ENCODE measurements at regions of chr1 and their contacts with region 1.

Region 1: GRCh38 chr1:87292684-87293493 is 35.8 kb upstream of the LMO4 start:
- DNase-seq: peak; percentile 49 to 77 (median 58)
- ATAC-seq: peak; percentile 92
- H3K4me3 ChIP-seq: no peak overlapping the region
- H3K27ac ChIP-seq: no peak overlapping the region
- H3K4me1 ChIP-seq: no peaks in the 10 kb centered on the region
- H3K27me3 ChIP-seq: peaks cover 5 to 14% of the 10 kb centered on the region in 2 experiments; a peak in 3 of 5 replicates
- CTCF ChIP-seq: peak; percentile 68 to 84 (median 71)
- EP300 ChIP-seq: no peak
- POLR2A ChIP-seq: no peak
- RAD21 ChIP-seq: peak; percentile 87 to 89

Region 2: DNA sequence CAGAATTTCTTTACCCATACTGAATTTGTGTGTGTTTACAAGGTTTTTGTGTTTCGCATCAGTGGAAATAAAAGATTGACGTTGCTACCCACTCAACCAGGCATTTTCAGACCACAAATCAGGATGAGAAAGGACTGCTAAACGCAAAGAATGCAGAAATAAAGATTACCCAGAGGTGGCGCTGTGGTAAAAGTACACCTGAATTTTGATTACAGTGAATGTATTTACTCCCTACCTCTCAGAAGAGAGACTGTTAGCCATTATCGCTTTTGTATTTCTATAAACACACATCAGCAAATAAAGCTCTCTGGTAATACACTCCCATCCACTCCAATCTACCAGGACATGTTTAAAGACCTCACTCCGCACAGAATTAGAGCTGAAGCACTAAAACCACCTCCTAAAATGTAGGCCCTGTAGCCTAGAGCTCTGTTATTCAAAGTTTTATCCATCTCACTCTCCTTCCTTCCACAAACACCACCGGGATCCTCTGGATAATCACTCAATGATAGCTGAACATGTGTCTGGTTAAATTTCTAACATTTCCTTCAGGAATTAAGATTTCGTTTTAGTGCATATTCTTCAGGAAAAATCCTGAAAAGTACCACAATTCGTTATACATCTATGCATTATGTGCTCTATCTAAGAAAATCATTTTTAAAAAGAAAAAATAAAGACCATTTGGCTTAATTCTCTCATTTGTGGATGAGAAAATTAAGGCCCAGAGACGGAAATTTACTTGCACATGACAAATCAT is 33.3 kb after region 1 on chr1:
- CTCF ChIA-PET with region 1: no interaction called
- POLR2A ChIA-PET with region 1: no interaction called
- in situ Hi-C with region 1: no loop called
- intact Hi-C with region 1: no loop called
- DNase-seq: peak; percentile 37 to 64 (median 46)
- ATAC-seq: no peak
- H3K4me3 ChIP-seq: no peak overlapping the region
- H3K27ac ChIP-seq: no peak overlapping the region
- H3K4me1 ChIP-seq: peaks cover 5% of the 10 kb centered on the region in 2 experiments; a peak in 3 of 5 replicates
- H3K27me3 ChIP-seq: no peaks in the 10 kb centered on the region
- CTCF ChIP-seq: peak; percentile 47 to 79 (median 76); a peak in 5 of 6 replicates
- EP300 ChIP-seq: no peak
- POLR2A ChIP-seq: no peak
- RAD21 ChIP-seq: peak; percentile 52 to 80

Region 3: DNA sequence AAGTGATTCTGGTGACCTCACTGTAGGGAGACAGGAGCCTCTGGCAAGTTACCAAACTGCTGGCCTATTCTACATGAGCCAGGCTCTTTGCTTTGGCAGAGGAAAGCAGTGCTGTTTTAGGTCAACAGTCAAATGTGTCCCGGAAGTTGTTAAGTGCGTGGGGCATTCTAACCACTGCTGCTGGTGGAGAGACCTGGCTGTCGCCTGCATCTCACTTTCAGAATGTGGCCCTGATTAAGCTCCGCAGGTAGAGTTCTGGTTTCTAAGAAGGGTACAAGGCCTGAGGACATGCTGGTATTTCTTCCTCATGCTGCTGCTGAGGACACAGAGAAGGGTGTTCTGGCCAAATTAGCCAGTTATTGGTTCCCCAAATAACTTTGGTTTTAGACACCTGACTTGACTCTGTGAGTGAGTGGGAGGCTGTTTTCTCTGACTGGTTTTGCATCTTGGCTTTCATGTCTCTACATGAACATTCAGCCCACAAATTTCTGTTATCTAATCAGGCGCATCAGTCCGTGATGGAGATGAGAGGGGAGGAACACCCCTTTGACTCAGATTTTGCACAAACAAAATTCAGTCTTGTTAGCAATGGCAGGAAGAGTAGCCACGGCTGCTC is 156.6 kb after region 1 on chr1:
- CTCF ChIA-PET with region 1: interaction called, 12 read pairs
- POLR2A ChIA-PET with region 1: no interaction called
- in situ Hi-C with region 1: no loop called
- intact Hi-C with region 1: loop called (anchors 2 kb)
- DNase-seq: no peak
- ATAC-seq: peak; percentile 36; the same call in 2 of the 3 replicates
- H3K4me3 ChIP-seq: no peak overlapping the region
- H3K27ac ChIP-seq: no peak overlapping the region
- H3K4me1 ChIP-seq: no peaks in the 10 kb centered on the region; a peak in 1 of 5 replicates
- H3K27me3 ChIP-seq: peaks cover 0 to 4% of the 10 kb centered on the region in 2 experiments; a peak in 1 of 5 replicates
- CTCF ChIP-seq: no peak
- EP300 ChIP-seq: no peak
- POLR2A ChIP-seq: no peak
- RAD21 ChIP-seq: no peak

Region 4: GRCh38 chr1:87942165-87942564 is 649.3 kb after region 1 on chr1:
- CTCF ChIA-PET with region 1: no interaction called
- POLR2A ChIA-PET with region 1: no interaction called
- in situ Hi-C with region 1: loop called (anchors 25 kb)
- intact Hi-C with region 1: no loop called
- DNase-seq: no peak
- ATAC-seq: no peak
- H3K4me3 ChIP-seq: no peak overlapping the region
- H3K27ac ChIP-seq: no peak overlapping the region
- H3K4me1 ChIP-seq: no peaks in the 10 kb centered on the region
- H3K27me3 ChIP-seq: no peaks in the 10 kb centered on the region
- CTCF ChIP-seq: no peak
- EP300 ChIP-seq: no peak
- POLR2A ChIP-seq: no peak
- RAD21 ChIP-seq: no peak

Region 5: GRCh38 chr1:87953732-87954344 is 660.9 kb after region 1 on chr1:
- CTCF ChIA-PET with region 1: interaction called, 4 read pairs
- POLR2A ChIA-PET with region 1: no interaction called
- in situ Hi-C with region 1: loop called (anchors 25 kb)
- intact Hi-C with region 1: loop called (anchors 2 kb)
- DNase-seq: peak; percentile 21 to 61 (median 28)
- ATAC-seq: peak; percentile 88
- H3K4me3 ChIP-seq: no peak overlapping the region
- H3K27ac ChIP-seq: no peak overlapping the region
- H3K4me1 ChIP-seq: no peaks in the 10 kb centered on the region
- H3K27me3 ChIP-seq: no peaks in the 10 kb centered on the region
- CTCF ChIP-seq: peak; percentile 49 to 71 (median 64)
- EP300 ChIP-seq: no peak
- POLR2A ChIP-seq: no peak
- RAD21 ChIP-seq: peak; percentile 72 to 73

Measured in K562 (cell line).